Panc1 (cell line): ENCODE measurements at regions of chr1 and their contacts with region 1.

Region 1: DNA sequence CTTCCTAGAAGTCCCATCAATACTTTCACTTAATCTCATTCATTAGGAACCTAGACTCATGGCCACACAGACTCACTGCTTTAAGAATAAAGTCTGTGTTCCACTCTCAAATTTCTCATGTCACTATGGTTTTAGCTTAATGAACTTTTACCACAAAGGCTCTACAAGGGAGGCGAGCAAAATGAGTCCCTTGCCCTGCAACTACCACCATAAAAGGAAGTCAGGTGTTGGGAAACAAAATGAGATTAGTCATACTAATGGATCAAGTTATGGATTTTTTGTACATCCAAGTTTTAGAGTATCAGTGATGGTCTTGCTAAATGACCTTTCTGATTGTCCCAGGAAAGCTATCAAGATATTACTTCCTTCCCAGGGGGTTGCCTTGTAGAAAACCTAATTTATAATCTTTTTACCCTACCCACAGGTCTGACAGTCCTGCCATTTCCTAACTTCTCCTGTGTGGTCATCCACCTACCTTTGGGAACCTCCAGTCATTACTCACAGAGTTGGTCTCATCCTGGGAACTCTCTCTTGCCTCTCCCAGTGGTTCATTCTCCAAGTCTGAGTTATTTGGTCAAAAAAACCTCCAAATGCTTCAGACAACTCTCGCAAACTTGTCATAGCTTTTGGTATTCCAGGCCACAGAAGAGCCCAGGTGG is 51.8 kb upstream of the SLC16A1 start:
- DNase-seq: no peak
- ATAC-seq: no peak
- H3K4me3 ChIP-seq: no peak overlapping the region
- H3K27ac ChIP-seq: no peak overlapping the region
- H3K4me1 ChIP-seq: no peaks in the 10 kb centered on the region
- H3K27me3 ChIP-seq: no peaks in the 10 kb centered on the region
- CTCF ChIP-seq: no peak

Region 2: GRCh38 chr1:112911506-112911905 is 96.3 kb before region 1 on chr1:
- CTCF ChIA-PET with region 1: interaction called, 13 read pairs
- POLR2A ChIA-PET with region 1: no interaction called
- in situ Hi-C with region 1: no loop called
- intact Hi-C with region 1: no loop called
- DNase-seq: no peak
- ATAC-seq: no peak
- H3K4me3 ChIP-seq: no peak overlapping the region
- H3K27ac ChIP-seq: no peak overlapping the region
- H3K4me1 ChIP-seq: no peaks in the 10 kb centered on the region
- H3K27me3 ChIP-seq: no peaks in the 10 kb centered on the region
- CTCF ChIP-seq: no peak

Region 3: GRCh38 chr1:112971006-112971405 is 36.8 kb before region 1 on chr1:
- CTCF ChIA-PET with region 1: no interaction called
- POLR2A ChIA-PET with region 1: interaction called, 13 read pairs
- in situ Hi-C with region 1: no loop called
- intact Hi-C with region 1: no loop called
- DNase-seq: no peak
- ATAC-seq: no peak
- H3K4me3 ChIP-seq: no peak overlapping the region
- H3K27ac ChIP-seq: no peak overlapping the region
- H3K4me1 ChIP-seq: no peaks in the 10 kb centered on the region
- H3K27me3 ChIP-seq: no peaks in the 10 kb centered on the region
- CTCF ChIP-seq: no peak

Region 4: DNA sequence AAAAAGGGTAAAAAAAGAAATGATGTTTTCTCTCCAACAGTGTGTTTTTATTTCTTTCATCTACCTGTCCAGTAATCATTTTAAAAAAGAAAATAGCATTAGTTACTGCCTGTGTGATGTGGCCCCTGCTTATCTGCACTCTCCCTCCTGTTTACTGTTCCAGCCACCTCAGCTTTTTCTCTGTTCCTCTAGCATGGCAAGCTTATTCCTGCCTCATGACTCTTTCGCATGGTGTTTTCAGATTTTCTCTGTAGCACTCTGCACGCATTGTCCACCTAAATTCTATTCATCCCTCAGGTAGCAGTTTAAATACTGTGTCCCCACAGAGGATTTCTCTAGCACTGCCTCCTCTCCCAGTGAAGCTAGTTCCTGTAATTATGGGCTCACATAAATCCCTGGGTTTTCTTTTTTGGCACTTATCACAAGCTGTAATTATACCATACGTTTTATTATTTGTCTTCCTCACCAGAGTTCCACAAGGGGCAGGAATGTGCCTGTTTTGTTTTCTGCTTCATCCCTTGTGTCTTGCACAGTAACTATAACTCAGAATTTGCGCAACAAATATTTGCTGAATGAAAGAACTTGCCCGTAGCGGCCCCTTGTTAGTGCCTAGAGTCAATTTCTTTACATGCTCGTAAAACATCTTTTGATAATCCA is 13.7 kb after region 1 on chr1:
- CTCF ChIA-PET with region 1: no interaction called
- POLR2A ChIA-PET with region 1: interaction called, 10 read pairs
- in situ Hi-C with region 1: no loop called
- intact Hi-C with region 1: no loop called
- DNase-seq: no peak
- ATAC-seq: no peak
- H3K4me3 ChIP-seq: no peak overlapping the region
- H3K27ac ChIP-seq: no peak overlapping the region
- H3K4me1 ChIP-seq: no peaks in the 10 kb centered on the region
- H3K27me3 ChIP-seq: no peaks in the 10 kb centered on the region
- CTCF ChIP-seq: no peak